ENCODE measurements at regions of chr6 and their contacts with region 1.

Region 1: DNA sequence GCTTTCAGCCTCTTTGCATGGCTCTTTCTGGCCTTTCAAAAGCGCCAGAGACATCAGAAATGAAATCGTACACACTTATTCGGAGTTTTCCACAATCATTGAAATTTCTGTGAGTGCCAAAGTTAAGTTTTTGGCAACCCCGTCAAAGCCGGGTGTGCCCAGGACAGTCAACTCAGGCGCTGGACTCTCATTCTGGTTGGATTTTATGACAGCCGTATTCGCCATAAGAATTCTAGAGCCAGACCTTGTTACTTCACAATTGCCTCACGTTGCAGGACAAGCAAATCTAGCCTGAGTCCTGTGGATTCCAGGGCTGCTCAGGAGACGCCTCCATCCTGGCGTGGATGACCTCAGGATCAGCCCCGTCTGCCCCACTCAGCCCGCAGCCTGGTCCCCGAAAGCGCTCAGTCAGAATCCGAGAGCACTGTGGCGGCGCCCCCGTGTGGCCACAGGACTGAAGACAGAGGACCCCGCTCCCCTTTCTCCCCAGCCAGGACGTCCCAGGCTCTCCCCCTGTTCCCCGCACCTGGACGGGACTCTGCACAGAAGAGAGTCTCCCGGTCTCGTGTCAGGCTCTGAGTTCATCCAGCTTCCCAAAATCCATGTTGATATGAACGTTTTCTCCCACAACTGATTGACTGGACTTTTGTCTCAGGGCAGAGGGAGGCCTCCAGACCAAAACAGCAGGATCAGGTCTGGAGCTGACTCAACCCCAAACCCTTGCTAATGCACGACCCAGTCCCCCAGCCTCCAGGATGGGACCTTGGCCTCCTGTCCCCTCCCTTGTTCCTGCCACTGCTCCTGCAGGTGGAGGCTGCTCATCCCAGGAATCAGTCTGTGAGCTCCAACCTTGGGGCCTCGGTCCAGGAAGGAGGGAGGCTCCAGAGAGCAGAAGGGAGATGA is 38.2 kb downstream of the MICA start:
- DNase-seq: peak; percentile 93
- ATAC-seq: peak; percentile 99

Region 2: GRCh38 chr6:31396422-31397152 is 45.0 kb before region 1 on chr6:
- intact Hi-C with region 1: loop called (anchors 2 kb)
- DNase-seq: peak; percentile 85
- ATAC-seq: peak; percentile 42

Measured in Right ventricle myocardium superior (tissue), 1 donor.